MCF 10A (cell line): ENCODE measurements at regions of chr12 and their contacts with region 1.

Region 1: GRCh38 chr12:56541631-56542030 is 20.0 kb downstream of the RBMS2 start:
- DNase-seq: no peak
- H3K4me3 Mint-ChIP-seq: no peak overlapping the region
- H3K27ac Mint-ChIP-seq: no peak overlapping the region
- H3K4me1 Mint-ChIP-seq: peaks cover 11% of the 10 kb centered on the region
- H3K27me3 Mint-ChIP-seq: no peaks in the 10 kb centered on the region
- CTCF ChIP-seq: no peak

Region 2: DNA sequence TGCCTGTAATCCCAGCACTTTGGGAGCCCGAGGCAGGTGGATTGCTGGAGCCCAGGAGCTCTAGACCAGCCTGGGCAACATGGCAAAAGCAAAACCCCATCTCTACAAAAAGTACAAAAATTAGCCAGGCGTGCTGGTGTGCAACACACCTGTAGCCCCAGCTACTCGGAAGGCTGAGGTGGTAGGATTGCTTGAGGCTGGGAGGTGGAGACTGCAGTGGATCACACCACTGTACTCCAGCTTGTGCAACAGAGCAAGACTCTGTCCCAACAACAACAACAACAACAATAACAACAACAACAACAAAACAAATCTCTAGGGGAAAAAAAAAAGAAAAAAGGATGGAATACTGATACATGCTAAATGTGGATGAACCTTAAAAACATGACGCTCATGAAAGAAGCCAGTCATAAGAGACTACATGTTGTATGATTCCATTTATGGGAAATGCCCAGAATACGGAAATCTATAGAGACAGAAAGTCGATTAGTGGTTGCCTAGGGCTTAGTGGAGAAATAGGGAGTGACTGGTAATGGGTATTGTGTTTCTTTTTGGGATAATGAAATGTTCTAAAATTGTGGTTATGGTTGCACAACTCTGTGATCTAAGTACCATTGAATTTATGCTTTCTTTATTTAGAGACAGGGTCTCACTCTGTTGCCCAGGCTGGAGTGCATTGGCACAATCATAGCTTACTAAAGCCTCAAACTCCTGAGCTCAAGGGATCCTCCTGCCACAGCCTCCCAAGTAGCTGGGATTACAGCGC is 12.2 kb before region 1 on chr12:
- CTCF ChIA-PET with region 1: interaction called, 4 read pairs
- POLR2A ChIA-PET with region 1: interaction called, 19 read pairs
- intact Hi-C with region 1: no loop called
- DNase-seq: peak; percentile 81
- H3K4me3 Mint-ChIP-seq: peak overlapping the region; percentile 42
- H3K27ac Mint-ChIP-seq: peak overlapping the region; percentile 96
- H3K4me1 Mint-ChIP-seq: peaks cover 43% of the 10 kb centered on the region
- H3K27me3 Mint-ChIP-seq: no peaks in the 10 kb centered on the region
- CTCF ChIP-seq: no peak